Caco-2 (cell line): ENCODE measurements at regions of chr6 and their contacts with region 1.

Region 1: GRCh38 chr6:151475653-151476523 is 17.9 kb upstream of the CCDC170 start:
- DNase-seq: peak; percentile 52 to 63
- H3K4me3 ChIP-seq: no peak overlapping the region
- H3K4me3 Mint-ChIP-seq: no peak overlapping the region
- H3K27ac Mint-ChIP-seq: peak overlapping the region; percentile 57
- H3K4me1 ChIP-seq: no peaks in the 10 kb centered on the region
- H3K4me1 Mint-ChIP-seq: no peaks in the 10 kb centered on the region
- H3K27me3 ChIP-seq: no peaks in the 10 kb centered on the region
- H3K27me3 Mint-ChIP-seq: no peaks in the 10 kb centered on the region
- CTCF ChIP-seq: peak; percentile 76 to 79

Region 2: GRCh38 chr6:151290877-151291721 is 184.8 kb before region 1 on chr6:
- CTCF ChIA-PET with region 1: no interaction called
- POLR2A ChIA-PET with region 1: no interaction called
- intact Hi-C with region 1: no loop called
- DNase-seq: no peak
- H3K4me3 ChIP-seq: no peak overlapping the region
- H3K4me3 Mint-ChIP-seq: no peak overlapping the region
- H3K27ac Mint-ChIP-seq: no peak overlapping the region
- H3K4me1 ChIP-seq: no peaks in the 10 kb centered on the region
- H3K4me1 Mint-ChIP-seq: no peaks in the 10 kb centered on the region
- H3K27me3 ChIP-seq: no peaks in the 10 kb centered on the region
- H3K27me3 Mint-ChIP-seq: peaks cover 8% of the 10 kb centered on the region
- CTCF ChIP-seq: no peak

Region 3: DNA sequence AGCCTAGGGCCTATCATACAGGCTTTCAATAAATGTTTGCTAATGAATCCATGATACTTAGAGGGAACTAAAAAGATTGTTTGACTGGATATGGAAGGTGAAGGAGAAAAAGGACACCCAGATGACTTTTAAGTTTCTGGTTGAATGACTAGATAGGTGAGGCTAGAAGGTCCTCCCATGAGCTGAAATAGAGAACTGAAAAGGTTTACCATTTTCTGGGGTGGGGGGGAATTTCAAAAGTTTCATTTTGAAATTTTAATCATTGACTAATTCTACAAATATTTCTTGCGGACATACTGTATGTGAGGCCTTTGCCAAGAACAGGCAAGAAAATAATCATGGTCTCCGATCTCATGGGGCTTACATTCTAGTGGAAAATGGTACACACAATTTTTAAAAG is 66.6 kb before region 1 on chr6:
- CTCF ChIA-PET with region 1: no interaction called
- POLR2A ChIA-PET with region 1: no interaction called
- intact Hi-C with region 1: loop called (anchors 1 kb)
- DNase-seq: no peak
- H3K4me3 ChIP-seq: no peak overlapping the region
- H3K4me3 Mint-ChIP-seq: no peak overlapping the region
- H3K27ac Mint-ChIP-seq: no peak overlapping the region
- H3K4me1 ChIP-seq: no peaks in the 10 kb centered on the region
- H3K4me1 Mint-ChIP-seq: no peaks in the 10 kb centered on the region
- H3K27me3 ChIP-seq: no peaks in the 10 kb centered on the region
- H3K27me3 Mint-ChIP-seq: no peaks in the 10 kb centered on the region
- CTCF ChIP-seq: no peak

Region 4: DNA sequence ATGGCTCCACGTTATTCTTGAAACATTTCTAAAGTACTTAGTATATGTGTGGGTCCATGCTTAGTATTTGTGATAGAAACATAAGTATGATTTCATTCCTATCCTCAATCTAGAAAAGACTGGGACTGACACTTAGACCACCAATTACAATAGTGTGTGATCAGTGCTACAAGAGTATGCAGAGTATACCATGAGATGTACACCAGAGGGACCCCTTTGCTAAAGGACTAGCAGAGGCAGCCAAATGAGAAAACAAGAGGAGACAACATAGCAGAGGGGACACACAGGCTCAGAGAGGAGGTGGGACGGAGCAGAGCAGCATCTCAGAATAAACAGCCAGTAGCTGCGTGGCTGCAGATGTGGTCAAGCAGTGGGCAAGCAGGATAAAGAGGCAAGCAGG is 45.0 kb before region 1 on chr6:
- CTCF ChIA-PET with region 1: no interaction called
- POLR2A ChIA-PET with region 1: no interaction called
- intact Hi-C with region 1: loop called (anchors 1 kb)
- DNase-seq: peak in 1 of 2 experiments; percentile 25
- H3K4me3 ChIP-seq: no peak overlapping the region
- H3K4me3 Mint-ChIP-seq: no peak overlapping the region
- H3K27ac Mint-ChIP-seq: no peak overlapping the region
- H3K4me1 ChIP-seq: no peaks in the 10 kb centered on the region
- H3K4me1 Mint-ChIP-seq: no peaks in the 10 kb centered on the region
- H3K27me3 ChIP-seq: no peaks in the 10 kb centered on the region
- H3K27me3 Mint-ChIP-seq: no peaks in the 10 kb centered on the region
- CTCF ChIP-seq: peak; percentile 20 to 33

Region 5: DNA sequence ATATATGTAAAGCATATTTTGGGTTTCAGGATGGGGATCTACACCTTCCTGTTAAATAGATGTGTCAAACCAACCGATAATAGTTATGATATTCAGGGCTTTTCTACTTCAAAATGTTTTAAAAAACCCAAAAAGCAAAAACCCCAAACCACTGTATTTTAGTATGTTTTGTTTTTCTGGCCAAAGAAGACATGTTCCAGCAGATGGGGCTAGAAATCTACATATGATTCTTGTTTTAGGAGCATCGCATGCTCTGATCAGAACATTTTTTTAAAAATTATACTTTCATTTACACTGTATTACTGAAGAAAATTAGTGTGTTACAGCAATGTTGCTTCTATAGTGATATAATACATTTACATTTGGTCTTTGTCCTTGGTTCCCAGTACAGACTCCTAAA is 35.0 kb before region 1 on chr6:
- CTCF ChIA-PET with region 1: no interaction called
- POLR2A ChIA-PET with region 1: no interaction called
- intact Hi-C with region 1: loop called (anchors 1 kb)
- DNase-seq: no peak
- H3K4me3 ChIP-seq: no peak overlapping the region
- H3K4me3 Mint-ChIP-seq: no peak overlapping the region
- H3K27ac Mint-ChIP-seq: peak overlapping the region; percentile 16
- H3K4me1 ChIP-seq: peaks cover 45% of the 10 kb centered on the region
- H3K4me1 Mint-ChIP-seq: peaks cover 12% of the 10 kb centered on the region
- H3K27me3 ChIP-seq: no peaks in the 10 kb centered on the region
- H3K27me3 Mint-ChIP-seq: no peaks in the 10 kb centered on the region
- CTCF ChIP-seq: peak; percentile 32 to 37

Region 6: DNA sequence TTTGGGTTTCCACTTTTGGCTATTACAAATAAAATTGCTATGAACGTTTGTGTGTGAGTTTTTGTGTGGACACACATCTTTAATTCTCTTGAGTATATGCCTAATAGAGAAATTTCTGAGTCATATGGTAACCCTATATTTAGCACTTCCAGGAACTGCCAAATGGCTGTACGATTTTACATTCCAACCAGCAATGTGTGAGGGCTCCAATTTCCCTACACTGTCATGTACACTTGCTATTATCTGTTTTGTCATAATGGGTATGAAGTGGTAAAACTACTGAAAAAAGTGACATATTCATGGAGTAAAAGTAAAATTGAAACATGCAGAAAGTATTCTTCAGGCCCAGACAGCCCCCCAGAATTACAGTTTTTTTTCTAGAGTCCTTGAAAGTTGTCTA is 272.0 kb after region 1 on chr6:
- CTCF ChIA-PET with region 1: no interaction called
- POLR2A ChIA-PET with region 1: no interaction called
- intact Hi-C with region 1: no loop called
- DNase-seq: no peak
- H3K4me3 ChIP-seq: no peak overlapping the region
- H3K4me3 Mint-ChIP-seq: no peak overlapping the region
- H3K27ac Mint-ChIP-seq: no peak overlapping the region
- H3K4me1 ChIP-seq: no peaks in the 10 kb centered on the region
- H3K4me1 Mint-ChIP-seq: no peaks in the 10 kb centered on the region
- H3K27me3 ChIP-seq: no peaks in the 10 kb centered on the region
- H3K27me3 Mint-ChIP-seq: peaks cover 7% of the 10 kb centered on the region
- CTCF ChIP-seq: no peak